ENCODE measurements at regions of chr6 and their contacts with region 1.

Region 1: DNA sequence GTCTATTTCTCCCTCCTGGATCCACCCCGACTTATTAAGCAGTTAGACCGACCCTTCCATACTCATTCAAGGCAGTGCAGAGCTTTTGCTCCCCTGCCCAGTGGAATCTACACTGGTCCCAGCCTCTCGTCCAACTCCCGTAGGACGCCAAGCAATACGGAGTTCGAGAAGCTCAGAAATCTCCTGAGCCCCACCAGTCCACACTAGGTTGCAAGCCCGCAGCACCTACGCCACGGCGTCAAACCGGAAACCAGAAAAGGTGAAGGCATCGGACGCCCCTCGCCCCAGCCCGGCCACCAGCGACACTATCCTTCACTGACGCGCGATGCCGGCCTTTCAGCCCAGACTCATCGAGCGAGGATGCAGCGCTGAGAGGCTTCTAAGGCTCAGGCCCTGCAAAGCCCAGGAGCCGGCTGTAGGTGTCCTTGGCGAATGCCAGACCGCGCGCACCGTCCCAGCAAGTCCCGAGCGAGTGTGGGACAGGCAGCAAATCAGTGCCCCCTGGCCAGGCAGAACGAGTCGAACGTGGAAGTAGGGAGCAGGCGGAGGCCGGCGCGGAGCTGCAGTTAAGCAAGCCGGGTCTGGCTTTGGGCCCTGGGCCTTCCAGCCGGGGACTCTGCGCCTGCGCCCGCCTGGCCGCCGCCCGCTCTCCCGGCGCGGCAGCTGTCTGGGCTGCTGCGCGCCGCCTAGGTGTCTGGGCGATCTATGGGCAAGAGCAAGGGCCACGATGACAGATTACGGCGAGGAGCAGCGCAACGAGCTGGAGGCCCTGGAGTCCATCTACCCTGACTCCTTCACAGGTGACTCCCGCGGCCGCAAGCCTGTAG is at the start of gene RWDD1:
- DNase-seq: peak; percentile 99
- H3K4me3 Mint-ChIP-seq: peak within 1 kb of the TSS; percentile 93
- H3K27ac Mint-ChIP-seq: peak within 1 kb of the TSS; percentile 88
- H3K4me1 Mint-ChIP-seq: peaks cover 49% of the 10 kb centered on the region
- H3K27me3 Mint-ChIP-seq: no peaks in the 10 kb centered on the region
- total RNA-seq, gene RWDD1: 47.8 to 50.3 TPM

Region 2: DNA sequence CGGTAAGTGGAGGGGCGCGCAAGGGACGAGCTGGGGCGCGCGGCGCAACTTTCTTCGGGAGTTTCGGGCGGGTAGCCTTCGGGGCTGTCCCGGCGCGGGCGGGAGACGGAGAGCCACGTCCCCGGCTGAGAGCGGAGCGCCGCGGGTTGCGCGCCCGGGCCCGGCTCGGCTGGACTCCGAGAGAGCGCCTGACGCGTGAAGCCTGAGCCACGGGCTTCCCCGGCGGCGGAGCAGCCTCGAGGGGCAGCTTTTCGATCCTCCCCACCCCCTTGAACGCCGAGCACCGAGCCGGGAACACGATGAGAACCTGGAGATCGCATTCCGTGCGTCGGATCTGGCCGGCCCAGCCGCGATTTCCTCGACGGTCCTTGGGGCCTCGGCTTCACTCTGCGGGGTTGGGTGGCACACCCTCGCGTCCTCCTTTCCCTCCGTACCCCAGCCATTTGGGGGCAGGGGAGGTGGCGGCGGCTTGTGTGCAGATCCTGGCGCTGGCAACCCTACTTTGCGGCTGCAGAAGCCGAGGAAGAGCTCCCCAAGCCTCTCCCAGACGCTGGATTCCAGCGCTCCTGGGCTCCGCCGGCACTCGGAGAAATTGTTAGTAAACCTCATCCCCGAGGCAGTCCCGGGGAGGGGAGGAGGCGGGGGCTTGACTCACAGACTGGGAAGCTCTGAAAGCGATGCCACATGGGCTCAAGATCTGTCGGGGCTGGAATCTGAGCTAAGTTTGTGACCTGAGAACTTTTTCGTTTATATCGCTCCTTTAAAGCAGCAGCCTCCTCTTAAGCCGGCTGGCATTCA is 199.8 kb before region 1 on chr6:
- CTCF ChIA-PET with region 1: interaction called, 3 read pairs
- intact Hi-C with region 1: loop called (anchors 2 kb)
- DNase-seq: peak; percentile 43
- H3K4me3 Mint-ChIP-seq: peak overlapping the region; percentile 71
- H3K27ac Mint-ChIP-seq: no peak overlapping the region
- H3K4me1 Mint-ChIP-seq: peaks cover 8% of the 10 kb centered on the region
- H3K27me3 Mint-ChIP-seq: peaks cover 24% of the 10 kb centered on the region

Region 3: DNA sequence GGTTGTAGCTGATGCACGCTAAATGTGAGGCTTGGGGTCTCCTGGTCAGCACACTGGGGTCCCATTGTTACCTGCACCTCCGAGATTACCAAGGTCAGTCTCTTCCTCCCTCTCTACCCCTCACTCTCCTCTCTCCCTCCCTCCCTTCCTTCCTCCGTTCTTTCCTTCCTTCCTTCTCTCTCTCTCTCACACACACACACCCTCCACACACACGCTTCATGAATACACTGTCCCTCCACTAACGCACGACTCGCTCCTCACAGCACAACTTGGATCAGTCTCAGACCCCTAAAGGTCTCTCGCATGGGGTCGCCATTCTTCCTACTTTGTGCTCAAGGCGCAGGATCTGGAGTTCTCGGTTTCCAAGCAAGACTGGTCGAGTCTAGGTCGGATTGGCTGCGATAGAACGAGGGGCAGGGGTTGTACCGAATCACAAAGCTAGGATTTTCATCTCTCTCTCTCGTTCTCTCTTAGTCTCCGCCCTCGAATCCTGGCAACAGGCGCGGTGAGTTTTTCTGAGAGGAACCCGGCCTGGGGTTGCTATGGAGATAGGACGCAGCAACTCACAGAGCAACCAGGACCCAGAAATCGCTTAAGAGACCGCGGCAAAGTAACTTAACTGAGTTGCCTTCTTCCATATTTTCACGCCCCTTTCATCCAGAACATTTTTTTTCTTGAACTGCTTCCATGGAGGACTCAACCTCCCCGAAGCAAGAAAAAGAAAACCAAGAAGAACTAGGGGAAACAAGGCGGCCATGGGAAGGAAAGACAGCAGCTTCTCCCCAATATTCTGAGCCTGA is 45.1 kb after region 1 on chr6 and contains the start of gene RSPH4A:
- CTCF ChIA-PET with region 1: interaction called, 3 read pairs
- intact Hi-C with region 1: loop called (anchors 1 kb)
- DNase-seq: peak; percentile 85
- H3K4me3 Mint-ChIP-seq: peak within 1 kb of the TSS; percentile 82
- H3K27ac Mint-ChIP-seq: no peak within 1 kb of the TSS
- H3K4me1 Mint-ChIP-seq: peaks cover 12% of the 10 kb centered on the region
- H3K27me3 Mint-ChIP-seq: peaks cover 11% of the 10 kb centered on the region
- total RNA-seq, gene RSPH4A: not detected

Region 4: DNA sequence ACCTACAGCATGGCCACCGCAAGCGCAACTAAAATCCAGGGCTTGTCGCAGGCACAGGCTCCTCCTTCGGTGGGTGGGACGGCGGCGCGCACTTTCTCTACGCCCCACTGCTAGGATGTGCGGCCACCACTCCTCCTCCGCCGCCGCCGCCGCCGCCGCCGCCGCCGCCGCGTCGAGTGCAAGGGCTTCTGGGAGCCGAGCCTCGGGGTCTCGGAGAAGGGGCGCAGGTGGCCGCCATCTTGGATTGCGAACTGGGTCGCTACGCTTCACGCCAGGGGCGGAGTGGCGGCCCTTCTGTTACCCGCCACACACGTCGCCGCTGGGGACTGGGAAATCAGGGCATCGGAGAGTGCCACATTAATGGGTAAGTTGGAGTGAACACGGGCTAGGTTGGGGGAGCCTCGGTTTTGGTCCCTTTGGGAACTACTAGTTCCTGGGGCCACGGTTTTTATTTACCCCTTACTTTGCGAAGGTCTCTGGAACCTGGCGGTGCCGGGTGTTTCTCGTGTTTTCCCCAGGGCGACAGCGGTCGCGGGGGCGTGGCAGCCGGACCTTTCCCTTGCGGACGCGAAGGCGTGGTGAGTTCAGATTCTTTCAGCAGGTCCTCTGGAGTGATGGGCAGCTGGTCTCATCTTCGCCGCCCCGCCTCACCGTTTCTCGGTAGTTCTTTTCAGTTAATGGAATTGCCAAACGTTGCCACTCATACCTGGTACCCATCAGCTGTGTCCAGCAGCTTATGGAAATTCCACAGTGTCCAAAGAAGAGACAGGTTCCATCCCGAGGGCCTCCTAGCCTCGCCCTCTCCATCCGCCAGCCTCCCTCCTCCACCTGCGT is 110.1 kb after region 1 on chr6 and contains the start of gene KPNA5:
- CTCF ChIA-PET with region 1: no interaction called
- intact Hi-C with region 1: loop called (anchors 1 kb)
- DNase-seq: peak; percentile 94
- H3K4me3 Mint-ChIP-seq: peak within 1 kb of the TSS; percentile 96
- H3K27ac Mint-ChIP-seq: peak within 1 kb of the TSS; percentile 97
- H3K4me1 Mint-ChIP-seq: peaks cover 43% of the 10 kb centered on the region
- H3K27me3 Mint-ChIP-seq: no peaks in the 10 kb centered on the region
- total RNA-seq, gene KPNA5: 8.4 to 8.9 TPM